GM12878 (cell line): ENCODE measurements at regions of chr14 and their contacts with region 1.

Region 1: DNA sequence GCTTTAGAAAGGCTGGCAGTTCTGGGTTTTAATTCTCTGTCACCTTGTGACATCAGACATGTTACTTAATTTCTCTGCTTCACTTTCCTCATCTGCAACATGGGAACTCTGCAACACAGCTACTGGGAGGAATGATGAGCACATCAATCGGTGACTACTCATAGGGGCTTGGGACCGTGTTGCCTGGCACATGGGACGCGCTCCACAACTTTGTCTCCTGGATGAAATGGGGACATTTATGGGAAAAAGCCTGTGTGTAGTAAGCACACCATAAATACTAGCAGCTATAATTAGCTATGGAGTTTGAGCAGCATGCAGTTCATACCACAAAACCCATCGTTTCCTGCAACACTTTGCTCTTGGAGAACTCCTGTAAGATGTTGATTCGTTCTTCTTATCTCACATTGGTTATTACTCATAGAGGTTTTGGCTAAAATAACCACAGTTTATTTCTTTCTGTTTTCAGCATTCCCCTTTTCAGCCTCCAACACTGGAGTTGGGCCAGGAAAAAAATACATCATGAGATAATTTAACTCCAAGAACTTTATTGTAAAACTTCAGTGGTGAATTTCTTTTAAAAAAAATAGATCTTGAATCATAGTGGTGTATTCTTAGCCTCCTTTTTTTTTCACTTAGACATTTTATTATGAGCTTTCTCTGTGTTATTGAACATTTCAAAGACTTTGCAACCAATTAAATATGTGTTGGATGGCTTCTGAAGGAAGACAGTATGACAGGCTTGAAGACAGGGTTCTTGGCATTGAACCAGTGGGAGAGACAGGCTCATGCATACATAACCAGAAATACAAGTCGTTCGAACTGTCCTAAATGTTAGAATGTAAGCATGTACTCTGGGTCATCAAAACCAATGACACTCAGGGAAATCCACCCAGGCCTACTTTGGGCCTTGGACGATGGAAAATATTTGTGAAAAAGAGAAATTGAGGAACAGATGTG is 72.7 kb downstream of the RIN3 start:
- DNase-seq: peak; percentile 76
- ATAC-seq: peak; percentile 36
- H3K4me3 ChIP-seq: no peak overlapping the region
- H3K27ac ChIP-seq: peak overlapping the region; percentile 32; the same call in 1 of the 2 replicates
- H3K4me1 ChIP-seq: peaks cover 71% of the 10 kb centered on the region
- H3K27me3 ChIP-seq: no peaks in the 10 kb centered on the region
- CTCF ChIP-seq: no peak
- EP300 ChIP-seq: peak; percentile 60 to 61
- POLR2A ChIP-seq: no peak
- RAD21 ChIP-seq: no peak

Region 2: GRCh38 chr14:92154283-92154942 is 431.8 kb before region 1 on chr14:
- CTCF ChIA-PET with region 1: no interaction called
- POLR2A ChIA-PET with region 1: no interaction called
- RAD21 ChIA-PET with region 1: no interaction called
- SMC1A ChIA-PET with region 1: no interaction called
- in situ Hi-C with region 1: no loop called
- intact Hi-C with region 1: no loop called
- DNase-seq: no peak
- ATAC-seq: no peak
- H3K4me3 ChIP-seq: no peak overlapping the region
- H3K27ac ChIP-seq: no peak overlapping the region
- H3K4me1 ChIP-seq: no peaks in the 10 kb centered on the region
- H3K27me3 ChIP-seq: no peaks in the 10 kb centered on the region
- CTCF ChIP-seq: no peak
- EP300 ChIP-seq: no peak
- POLR2A ChIP-seq: no peak
- RAD21 ChIP-seq: no peak

Region 3: DNA sequence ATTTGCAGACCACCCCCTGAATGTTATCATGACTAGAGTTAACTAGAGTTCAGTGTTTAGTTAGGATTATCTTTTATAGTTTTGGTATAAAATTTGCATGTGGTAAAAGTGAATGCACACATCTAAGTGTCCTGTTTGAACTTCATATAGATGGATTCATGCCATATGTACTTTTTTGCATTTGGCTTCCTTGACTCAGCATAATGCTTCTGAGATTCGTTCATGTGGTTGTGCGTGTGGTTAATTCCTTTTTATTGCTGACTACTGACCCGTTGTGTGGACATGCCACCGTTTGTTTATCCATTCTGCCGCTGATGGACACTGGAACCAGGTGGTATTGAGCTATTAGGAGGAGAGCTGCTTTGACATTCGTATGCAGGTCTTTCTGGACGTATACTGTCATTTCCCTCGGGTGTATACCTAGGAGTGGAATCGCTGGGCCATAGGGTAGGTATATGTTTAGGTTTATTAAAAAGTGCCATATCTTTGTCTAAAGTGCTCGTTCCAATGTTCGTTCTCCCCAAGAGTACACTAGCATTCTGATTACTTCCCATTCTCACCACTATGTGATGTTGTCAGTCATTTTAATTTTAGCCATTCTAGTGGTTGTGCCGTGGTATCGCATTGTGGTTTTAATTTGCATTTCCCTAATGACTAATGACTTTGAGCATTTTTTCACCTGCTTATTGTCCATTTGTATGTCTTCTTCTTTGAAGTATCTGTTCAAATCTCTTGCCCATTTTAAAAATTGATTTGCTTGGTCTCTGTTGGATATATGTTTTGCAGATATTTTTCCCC is 35.0 kb before region 1 on chr14:
- CTCF ChIA-PET with region 1: interaction called, 6 read pairs
- POLR2A ChIA-PET with region 1: interaction called, 3 read pairs
- RAD21 ChIA-PET with region 1: interaction called, 19 read pairs
- SMC1A ChIA-PET with region 1: interaction called, 11 read pairs
- in situ Hi-C with region 1: no loop called
- intact Hi-C with region 1: no loop called
- DNase-seq: peak; percentile 82
- ATAC-seq: peak; percentile 92
- H3K4me3 ChIP-seq: peak overlapping the region; percentile 12; the same call in 1 of the 2 replicates
- H3K27ac ChIP-seq: 0 out of 2 replicates have a peak overlapping the region, but pooled peaks have one; percentile 20
- H3K4me1 ChIP-seq: peaks cover 41% of the 10 kb centered on the region
- H3K27me3 ChIP-seq: no peaks in the 10 kb centered on the region
- CTCF ChIP-seq: peak; percentile 36 to 64 (median 44); a peak in 5 of 6 replicates
- EP300 ChIP-seq: peak; percentile 69 to 75; a peak in 2 of 4 replicates
- POLR2A ChIP-seq: no peak
- RAD21 ChIP-seq: peak; percentile 45

Region 4: GRCh38 chr14:92603309-92604242 is 17.3 kb after region 1 on chr14:
- CTCF ChIA-PET with region 1: interaction called, 23 read pairs
- POLR2A ChIA-PET with region 1: no interaction called
- RAD21 ChIA-PET with region 1: interaction called, 5 read pairs
- SMC1A ChIA-PET with region 1: interaction called, 14 read pairs
- in situ Hi-C with region 1: no loop called
- intact Hi-C with region 1: no loop called
- DNase-seq: no peak
- ATAC-seq: peak; percentile 47; the same call in 2 of the 3 replicates
- H3K4me3 ChIP-seq: no peak overlapping the region
- H3K27ac ChIP-seq: no peak overlapping the region
- H3K4me1 ChIP-seq: no peaks in the 10 kb centered on the region; the same call in 1 of the 2 replicates
- H3K27me3 ChIP-seq: no peaks in the 10 kb centered on the region
- CTCF ChIP-seq: peak in 2 of 3 experiments; percentile 21 to 30; a peak in 2 of 6 replicates
- EP300 ChIP-seq: no peak
- POLR2A ChIP-seq: no peak
- RAD21 ChIP-seq: no peak

Region 5: GRCh38 chr14:92651106-92651757 is 65.0 kb after region 1 on chr14:
- CTCF ChIA-PET with region 1: interaction called, 10 read pairs
- POLR2A ChIA-PET with region 1: interaction called, 11 read pairs
- RAD21 ChIA-PET with region 1: interaction called, 101 read pairs
- SMC1A ChIA-PET with region 1: interaction called, 25 read pairs
- in situ Hi-C with region 1: no loop called
- intact Hi-C with region 1: loop called (anchors 1 kb)
- DNase-seq: peak; percentile 76
- ATAC-seq: peak; percentile 79
- H3K4me3 ChIP-seq: peak overlapping the region; percentile 66; the same call in 1 of the 2 replicates
- H3K27ac ChIP-seq: peak overlapping the region; percentile 89
- H3K4me1 ChIP-seq: peaks cover 33% of the 10 kb centered on the region
- H3K27me3 ChIP-seq: no peaks in the 10 kb centered on the region
- CTCF ChIP-seq: no peak
- EP300 ChIP-seq: peak; percentile 84 to 86; a peak in 3 of 4 replicates
- POLR2A ChIP-seq: peak; percentile 75
- RAD21 ChIP-seq: no peak

Region 6: DNA sequence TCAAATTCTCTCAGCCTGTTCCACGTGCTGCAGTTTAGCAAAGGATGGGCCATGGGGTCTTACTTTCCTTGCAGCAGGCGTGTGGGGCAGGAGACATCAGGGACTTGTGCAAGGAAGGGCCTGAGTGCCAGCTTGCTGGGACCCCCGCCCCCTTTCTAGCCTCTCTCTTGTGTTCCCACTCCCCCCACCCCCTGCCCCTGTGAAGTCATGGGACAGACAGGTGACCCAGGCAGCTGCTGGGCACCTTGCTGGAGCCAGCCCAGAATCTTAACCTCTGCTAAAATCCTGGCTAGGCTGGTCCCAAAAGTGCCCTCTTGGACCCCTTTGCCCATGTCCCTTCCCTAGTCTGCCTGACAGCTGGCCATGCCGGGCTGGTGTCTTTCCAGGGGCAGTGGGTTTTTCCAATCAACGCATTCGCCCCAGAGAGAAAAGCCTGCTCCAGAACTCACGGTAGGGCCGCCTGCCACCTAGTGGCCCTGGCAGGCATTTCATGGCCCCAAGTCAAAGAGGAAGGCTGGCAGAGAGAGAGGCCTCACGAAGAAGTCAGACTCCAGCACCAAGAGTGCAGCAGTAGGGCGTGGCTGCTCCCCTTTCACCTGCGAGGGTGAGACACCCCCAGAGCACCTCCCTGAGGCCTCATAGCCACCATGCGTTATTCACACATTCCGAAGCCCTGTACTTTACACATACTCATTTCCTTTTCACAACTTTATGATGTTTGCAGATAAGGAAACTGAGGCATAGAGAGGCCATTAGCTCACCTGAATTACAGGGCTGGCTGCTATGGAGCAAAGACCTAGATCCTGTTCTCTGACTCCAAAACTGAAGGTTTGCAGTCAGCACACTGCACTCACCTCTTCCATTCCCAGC is 94.8 kb after region 1 on chr14:
- CTCF ChIA-PET with region 1: interaction called, 81 read pairs
- POLR2A ChIA-PET with region 1: interaction called, 3 read pairs
- RAD21 ChIA-PET with region 1: interaction called, 31 read pairs
- SMC1A ChIA-PET with region 1: interaction called, 63 read pairs
- in situ Hi-C with region 1: no loop called
- intact Hi-C with region 1: loop called (anchors 1 kb)
- DNase-seq: no peak
- ATAC-seq: peak; percentile 52
- H3K4me3 ChIP-seq: no peak overlapping the region
- H3K27ac ChIP-seq: no peak overlapping the region
- H3K4me1 ChIP-seq: peaks cover 28% of the 10 kb centered on the region
- H3K27me3 ChIP-seq: no peaks in the 10 kb centered on the region
- CTCF ChIP-seq: peak; percentile 84 to 91 (median 90)
- EP300 ChIP-seq: no peak
- POLR2A ChIP-seq: no peak
- RAD21 ChIP-seq: peak; percentile 97

Region 7: DNA sequence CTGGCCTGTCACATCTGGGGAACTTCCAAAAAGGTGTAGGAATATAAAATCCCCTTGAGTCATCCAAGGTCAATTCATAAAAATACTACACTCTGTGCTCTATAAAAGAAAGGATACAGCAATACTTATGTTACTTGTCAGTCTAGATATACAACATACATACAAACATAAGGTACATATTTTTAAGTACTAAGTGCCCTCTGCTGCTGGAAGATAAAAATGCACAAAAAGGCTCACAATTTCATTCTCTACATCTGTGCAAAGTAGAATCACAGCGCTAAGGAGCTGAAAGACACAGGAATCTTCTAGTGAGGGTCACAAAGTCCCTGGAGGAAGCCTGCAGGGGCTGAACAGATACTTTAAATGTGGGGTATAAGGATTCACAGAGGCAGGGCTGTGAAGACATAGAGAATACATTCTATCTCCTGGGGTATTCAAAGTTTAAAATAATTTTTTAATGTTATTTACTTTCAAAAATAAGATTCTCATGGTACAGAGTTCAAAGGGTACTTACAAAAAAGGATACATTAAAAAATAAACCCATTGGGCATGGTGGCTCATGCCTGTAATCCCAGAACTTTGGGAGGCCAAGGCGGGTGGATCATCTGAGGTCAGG is 197.7 kb after region 1 on chr14:
- CTCF ChIA-PET with region 1: interaction called, 5 read pairs
- POLR2A ChIA-PET with region 1: no interaction called
- RAD21 ChIA-PET with region 1: interaction called, 3 read pairs
- SMC1A ChIA-PET with region 1: interaction called, 3 read pairs
- in situ Hi-C with region 1: loop called (anchors 10 kb)
- intact Hi-C with region 1: loop called (anchors 5 kb)
- DNase-seq: no peak
- ATAC-seq: peak; percentile 88
- H3K4me3 ChIP-seq: no peak overlapping the region
- H3K27ac ChIP-seq: no peak overlapping the region
- H3K4me1 ChIP-seq: 0 out of 2 replicates have a peak, but pooled peaks cover 3% of the 10 kb centered on the region
- H3K27me3 ChIP-seq: no peaks in the 10 kb centered on the region
- CTCF ChIP-seq: peak; percentile 52 to 66 (median 62); a peak in 5 of 6 replicates
- EP300 ChIP-seq: no peak
- POLR2A ChIP-seq: no peak
- RAD21 ChIP-seq: peak; percentile 77